Left lung (tissue), 14 donors: ENCODE measurements at regions of chr1 and their contacts with region 1.

Region 1: DNA sequence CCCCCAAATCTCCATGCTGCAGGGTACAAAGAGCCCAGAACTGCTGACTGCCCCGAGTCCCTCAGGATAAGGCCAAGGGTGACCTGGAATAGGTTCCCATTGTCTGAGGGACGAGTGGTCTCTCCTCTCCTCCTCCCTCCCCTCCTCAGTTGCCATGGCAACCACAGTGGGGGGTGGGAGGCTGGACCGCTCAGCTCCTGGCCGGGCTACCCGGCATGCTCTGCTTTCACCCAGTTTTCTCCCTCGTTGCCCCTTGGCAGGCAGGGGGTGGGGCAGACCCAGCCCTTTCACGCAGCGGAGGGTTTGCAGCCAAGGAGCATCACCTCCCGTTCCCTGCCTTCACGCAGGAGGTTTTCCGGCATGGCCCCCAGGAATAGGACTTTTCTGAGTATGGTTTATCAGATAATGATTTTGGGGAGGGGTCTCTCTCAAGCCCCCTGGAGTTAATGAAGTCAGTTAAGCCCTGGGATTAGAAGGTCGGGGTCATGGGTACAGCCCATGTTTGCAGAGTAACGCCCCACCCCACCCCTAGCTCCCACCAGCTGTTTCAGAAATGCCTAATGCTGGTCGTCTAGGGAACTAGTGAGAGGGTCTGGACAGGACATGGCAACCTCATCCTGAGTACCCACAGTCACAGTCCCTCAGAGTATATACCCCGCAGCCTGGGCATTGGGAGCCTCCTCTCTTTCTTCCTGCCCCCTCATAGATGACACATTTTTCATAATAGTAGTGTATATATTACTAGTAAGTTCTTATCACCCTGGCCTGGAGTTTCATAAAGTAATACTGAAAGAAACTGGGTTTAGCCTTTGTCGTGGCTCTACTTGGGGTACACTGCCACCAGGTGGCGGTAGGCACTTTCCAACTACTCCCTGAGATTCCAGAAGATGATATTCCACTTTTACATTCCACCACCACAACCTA is 20.7 kb downstream of the C1QB start:
- DNase-seq: peak in 1 of 4 donors; percentile 52
- ATAC-seq: peak; percentile 72
- H3K4me3 ChIP-seq: no peak overlapping the region
- H3K27ac ChIP-seq: no peak overlapping the region
- H3K4me1 ChIP-seq: no peaks in the 10 kb centered on the region
- H3K27me3 ChIP-seq: peaks cover 0 to 86% of the 10 kb centered on the region in 2 donors
- CTCF ChIP-seq: peak; percentile 42 to 67

Region 2: DNA sequence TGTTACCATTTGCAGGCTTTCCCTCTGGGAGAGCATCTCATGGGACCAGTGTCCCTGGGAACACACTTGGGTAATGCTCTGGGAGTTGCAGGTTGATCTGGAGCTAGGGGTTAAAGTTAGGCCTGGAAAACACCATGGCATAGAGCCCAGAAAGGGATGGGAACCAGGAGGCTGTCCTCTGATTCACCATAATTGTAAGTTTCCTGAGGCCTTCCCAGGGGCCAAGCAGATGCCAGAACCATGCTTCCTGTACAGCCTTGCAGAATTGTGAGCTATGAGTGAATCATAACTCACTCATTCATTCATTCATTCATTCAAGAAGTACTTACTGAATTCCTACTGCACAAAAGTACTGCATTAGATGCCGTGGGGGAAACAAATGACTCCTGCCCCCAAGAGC is 248.9 kb after region 1 on chr1:
- intact Hi-C with region 1: loop called in 1 of 2 experiments (anchors 10 kb)
- DNase-seq: no peak
- ATAC-seq: no peak
- H3K4me3 ChIP-seq: no peak overlapping the region
- H3K27ac ChIP-seq: no peak overlapping the region
- H3K4me1 ChIP-seq: no peaks in the 10 kb centered on the region
- H3K27me3 ChIP-seq: peaks cover 0 to 12% of the 10 kb centered on the region in 2 donors
- CTCF ChIP-seq: no peak